Activated T-helper 1 cell treated with anti-CD3 and anti-CD28 coated beads, Interleukin-12 subunit alpha, Interleukin-12 subunit beta, Interleukin-2, Interleukin-4 antibody, amounts not matched to agents 30 ng/mL and 10 ng/mL and 1 ng/mL, durations not matched to agents 14 hours and 24 hours and 36 hours (primary cell): ENCODE measurements at regions of chr5 and their contacts with region 1.

Region 1: DNA sequence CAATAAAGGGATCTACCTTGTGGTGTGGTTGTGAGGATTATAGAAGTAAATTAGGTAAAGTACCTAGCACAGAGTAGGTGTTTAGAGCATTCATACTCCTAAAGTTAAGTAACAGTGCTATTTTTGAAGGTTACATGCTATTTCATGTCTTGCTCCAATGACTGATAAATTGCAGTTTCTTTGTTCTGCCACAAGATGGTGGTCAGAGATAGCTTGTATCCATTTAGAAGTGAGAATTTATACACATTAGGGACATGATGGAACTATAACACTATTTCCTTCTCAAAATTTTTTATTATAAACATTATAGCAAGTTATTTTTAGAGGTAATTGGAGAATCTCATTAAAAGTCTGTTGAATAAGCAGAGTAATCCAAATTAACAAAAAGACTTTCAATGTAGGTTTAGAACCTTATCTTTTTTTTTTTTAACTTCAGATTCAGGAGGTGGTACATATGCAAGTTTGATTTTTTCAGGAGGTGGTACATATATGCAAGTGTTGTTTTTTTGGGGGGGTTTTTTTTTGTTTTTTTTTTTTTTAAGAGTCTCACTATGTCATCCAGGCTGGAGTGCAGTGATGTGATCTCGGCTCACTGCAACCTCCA is 17.1 kb downstream of the MTREX start:
- DNase-seq: no peak
- H3K4me3 Mint-ChIP-seq: no peak overlapping the region
- H3K27ac Mint-ChIP-seq: no peak overlapping the region
- H3K4me1 Mint-ChIP-seq: peaks cover 21% of the 10 kb centered on the region
- H3K27me3 Mint-ChIP-seq: no peaks in the 10 kb centered on the region

Region 2: GRCh38 chr5:55226027-55226933 is 98.6 kb before region 1 on chr5:
- intact Hi-C with region 1: no loop called
- DNase-seq: no peak
- H3K4me3 Mint-ChIP-seq: peak overlapping the region; percentile 61
- H3K27ac Mint-ChIP-seq: peak overlapping the region; percentile 65
- H3K4me1 Mint-ChIP-seq: peaks cover 58% of the 10 kb centered on the region
- H3K27me3 Mint-ChIP-seq: peaks cover 87% of the 10 kb centered on the region

Region 3: GRCh38 chr5:55307383-55308253 is 17.3 kb before region 1 on chr5 and contains the starts of genes DHX29 and MTREX:
- intact Hi-C with region 1: loop called (anchors 2 kb)
- DNase-seq: peak; percentile 89
- H3K4me3 Mint-ChIP-seq: no peak within 1 kb of the TSS
- H3K27ac Mint-ChIP-seq: no peak within 1 kb of the TSS
- H3K4me1 Mint-ChIP-seq: peaks cover 19% of the 10 kb centered on the region
- H3K27me3 Mint-ChIP-seq: no peaks in the 10 kb centered on the region
- total RNA-seq, gene DHX29: 20.3 and 22.3 TPM in 2 replicates
- total RNA-seq, gene MTREX: 110 and 122 TPM in 2 replicates

Region 4: GRCh38 chr5:55345327-55345726 is 20.4 kb after region 1 on chr5:
- intact Hi-C with region 1: no loop called
- DNase-seq: no peak
- H3K4me3 Mint-ChIP-seq: no peak overlapping the region
- H3K27ac Mint-ChIP-seq: no peak overlapping the region
- H3K4me1 Mint-ChIP-seq: no peaks in the 10 kb centered on the region
- H3K27me3 Mint-ChIP-seq: no peaks in the 10 kb centered on the region

Region 5: DNA sequence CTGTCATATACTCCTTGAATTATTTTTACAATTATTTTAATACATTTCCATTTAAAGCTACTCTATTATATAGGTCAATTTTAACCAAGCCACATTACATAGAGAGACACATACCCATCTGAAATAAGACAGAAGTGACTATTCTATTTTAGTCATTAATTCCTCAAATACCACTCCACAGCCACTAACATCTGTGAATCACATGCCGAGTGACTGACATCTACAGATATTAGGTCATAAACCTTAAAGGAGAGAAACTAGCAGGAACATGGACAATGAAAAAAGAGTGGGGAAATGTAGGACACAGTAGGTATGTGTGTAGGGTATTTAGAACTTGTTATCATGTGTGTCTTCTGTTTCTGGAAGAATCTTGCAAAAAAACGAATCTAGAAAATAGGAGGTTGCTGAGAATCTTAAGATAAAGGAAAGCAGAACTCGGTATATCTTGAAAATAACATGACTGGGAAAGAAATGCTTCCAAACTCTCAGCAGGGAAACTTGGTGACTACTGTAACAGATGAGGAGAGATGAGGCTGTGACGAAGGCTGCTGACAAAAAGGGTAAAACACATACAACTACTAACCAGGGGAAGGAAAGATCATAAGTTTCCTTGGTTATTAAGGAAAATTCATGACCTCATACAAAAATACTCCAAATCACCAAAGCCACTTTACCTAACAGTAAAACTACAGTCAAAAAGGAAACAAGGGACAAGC is 125.3 kb after region 1 on chr5:
- intact Hi-C with region 1: no loop called
- DNase-seq: no peak
- H3K4me3 Mint-ChIP-seq: no peak overlapping the region
- H3K27ac Mint-ChIP-seq: no peak overlapping the region
- H3K4me1 Mint-ChIP-seq: peaks cover 11% of the 10 kb centered on the region
- H3K27me3 Mint-ChIP-seq: no peaks in the 10 kb centered on the region